ENCODE measurements at regions of chr6 and their contacts with region 1.

Region 1: DNA sequence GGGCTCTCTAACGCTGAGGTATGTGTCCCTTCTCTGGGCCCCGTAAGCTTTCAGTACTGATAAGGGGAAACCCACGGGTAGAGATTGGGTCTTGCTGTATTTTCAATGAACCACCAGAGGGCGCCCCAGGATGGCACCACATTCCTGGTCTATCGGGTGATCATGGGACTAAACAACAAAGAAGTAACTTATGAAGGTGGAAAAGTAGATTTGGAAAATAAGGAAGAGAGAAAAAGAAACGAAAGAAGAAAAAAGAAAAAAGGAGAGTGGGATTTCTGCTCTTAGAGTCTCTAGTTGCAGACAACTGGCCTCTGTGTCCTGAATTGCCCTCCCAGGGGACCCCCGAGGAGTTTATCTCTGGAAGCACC is 93.8 kb downstream of the GMPR start:
- DNase-seq: peak; percentile 74
- H3K4me3 Mint-ChIP-seq: no peak overlapping the region
- H3K27ac Mint-ChIP-seq: no peak overlapping the region
- H3K4me1 Mint-ChIP-seq: peaks cover 18% of the 10 kb centered on the region
- H3K27me3 Mint-ChIP-seq: no peaks in the 10 kb centered on the region

Region 2: DNA sequence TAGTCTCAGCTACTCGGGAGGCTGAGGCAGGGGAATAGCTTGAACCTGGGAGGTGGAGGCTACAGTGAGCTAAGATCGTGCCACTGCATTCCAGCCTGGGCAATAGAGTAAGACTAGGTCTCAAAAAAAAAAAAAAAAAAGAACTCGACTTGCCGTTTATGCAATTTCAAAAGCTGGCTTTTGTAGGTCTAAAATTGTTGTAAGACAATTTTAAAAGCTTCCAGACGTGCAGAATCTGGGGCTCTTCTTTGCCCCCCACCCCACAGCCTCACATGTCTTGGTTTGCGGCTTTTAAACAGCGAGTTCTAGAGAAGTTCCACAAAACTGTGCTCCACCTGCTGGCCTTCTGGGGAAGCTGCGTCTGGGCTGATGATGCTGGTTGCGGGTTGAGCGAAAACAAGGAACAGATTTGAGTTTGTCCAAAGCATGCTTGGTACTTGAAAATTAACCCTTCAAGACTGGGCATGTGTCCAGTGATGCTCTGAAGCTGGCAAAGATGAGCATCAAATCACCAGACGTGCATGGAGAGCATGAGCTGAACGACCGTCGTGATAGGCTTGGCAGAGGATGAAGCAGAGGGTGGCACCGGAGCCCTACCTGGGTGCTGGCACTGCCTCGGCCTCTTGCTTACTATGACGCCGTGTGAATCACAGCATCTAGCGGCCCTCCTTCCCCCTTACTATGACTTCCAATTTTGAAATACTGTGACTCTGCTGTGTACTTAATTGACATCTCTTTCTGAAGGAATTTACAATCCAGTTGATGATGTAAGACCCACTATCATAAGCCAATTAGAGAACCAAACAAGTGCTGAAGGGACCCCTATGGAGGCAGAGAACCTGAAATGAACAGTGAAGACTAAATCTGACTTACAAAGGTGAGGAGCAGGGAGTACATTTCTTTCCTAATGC is 77.6 kb after region 1 on chr6:
- intact Hi-C with region 1: loop called (anchors 1 kb)
- DNase-seq: peak; percentile 34
- H3K4me3 Mint-ChIP-seq: no peak overlapping the region
- H3K27ac Mint-ChIP-seq: peak overlapping the region; percentile 56
- H3K4me1 Mint-ChIP-seq: peaks cover 74% of the 10 kb centered on the region
- H3K27me3 Mint-ChIP-seq: no peaks in the 10 kb centered on the region

Region 3: GRCh38 chr6:16514249-16514648 is 182.1 kb after region 1 on chr6:
- intact Hi-C with region 1: loop called (anchors 1 kb)
- DNase-seq: peak; percentile 28
- H3K4me3 Mint-ChIP-seq: peak overlapping the region; percentile 45
- H3K27ac Mint-ChIP-seq: peak overlapping the region; percentile 60
- H3K4me1 Mint-ChIP-seq: peaks cover 78% of the 10 kb centered on the region
- H3K27me3 Mint-ChIP-seq: no peaks in the 10 kb centered on the region

Region 4: GRCh38 chr6:16670183-16670582 is 338.0 kb after region 1 on chr6:
- intact Hi-C with region 1: loop called (anchors 5 kb)
- DNase-seq: no peak
- H3K4me3 Mint-ChIP-seq: peak overlapping the region; percentile 51
- H3K27ac Mint-ChIP-seq: peak overlapping the region; percentile 94
- H3K4me1 Mint-ChIP-seq: peaks cover 84% of the 10 kb centered on the region
- H3K27me3 Mint-ChIP-seq: no peaks in the 10 kb centered on the region

Region 5: GRCh38 chr6:16964553-16965501 is 632.7 kb after region 1 on chr6:
- intact Hi-C with region 1: loop called (anchors 1 kb)
- DNase-seq: peak; percentile 42
- H3K4me3 Mint-ChIP-seq: no peak overlapping the region
- H3K27ac Mint-ChIP-seq: no peak overlapping the region
- H3K4me1 Mint-ChIP-seq: peaks cover 20% of the 10 kb centered on the region
- H3K27me3 Mint-ChIP-seq: peaks cover 11% of the 10 kb centered on the region

Measured in activated T-helper 1 cell treated with anti-CD3 and anti-CD28 coated beads, Interleukin-12 subunit alpha, Interleukin-12 subunit beta, Interleukin-2, Interleukin-4 antibody, amounts not matched to agents 30 ng/mL and 10 ng/mL and 1 ng/mL, durations not matched to agents 14 hours and 24 hours and 36 hours (primary cell).